AG04450 (cell line): ENCODE measurements at regions of chr4 and their contacts with region 1.

Region 1: DNA sequence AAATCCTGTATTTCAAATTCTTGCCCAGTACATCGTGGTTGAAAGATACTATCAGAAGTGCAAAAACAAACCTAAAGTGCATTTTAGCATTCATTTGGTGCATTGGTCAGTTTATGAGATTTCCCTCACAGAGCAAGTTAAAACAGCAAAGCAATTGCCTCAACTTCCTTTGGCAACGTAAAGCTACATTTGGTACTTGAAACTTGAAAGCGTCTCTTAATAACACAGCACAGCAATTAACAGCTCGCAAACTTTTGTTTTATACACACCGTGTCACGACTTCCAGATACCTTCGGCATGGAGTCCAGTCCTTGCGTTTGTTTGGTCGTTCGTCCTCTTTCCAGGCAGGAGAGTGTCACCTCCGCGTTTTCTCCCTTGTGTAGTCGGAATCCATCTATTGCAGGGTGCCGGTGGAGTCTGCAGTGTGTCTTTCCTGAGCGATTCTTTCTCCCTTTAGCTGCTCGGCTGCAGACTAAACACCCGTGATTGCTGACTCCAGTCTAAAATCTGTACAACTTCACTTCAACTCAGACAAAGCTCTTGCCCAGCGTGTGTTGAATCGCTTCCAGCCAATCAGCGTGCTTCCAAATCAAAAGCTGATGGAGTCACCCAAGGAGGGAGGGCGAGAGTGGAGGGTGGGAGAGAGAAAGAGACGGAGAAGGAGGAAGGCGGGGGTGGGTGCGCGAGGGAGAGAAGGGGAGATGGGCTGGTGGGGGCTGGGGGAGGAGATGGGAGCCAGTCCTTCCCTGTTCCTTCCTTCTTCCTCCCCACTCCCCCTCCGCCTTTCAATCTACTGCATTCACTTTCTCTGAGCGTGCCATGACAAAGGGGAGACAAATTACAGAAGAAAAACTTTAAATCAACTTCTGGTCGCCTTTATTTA is at the start of gene PCDH18:
- DNase-seq: peak; percentile 97
- H3K4me3 ChIP-seq: peak within 1 kb of the TSS; percentile 77
- H3K27ac ChIP-seq: peak within 1 kb of the TSS; percentile 65
- H3K27me3 ChIP-seq: no peaks in the 10 kb centered on the region
- CTCF ChIP-seq: no peak
- polyA plus RNA-seq, gene PCDH18: 204 and 255 TPM in 2 replicates

Region 2: DNA sequence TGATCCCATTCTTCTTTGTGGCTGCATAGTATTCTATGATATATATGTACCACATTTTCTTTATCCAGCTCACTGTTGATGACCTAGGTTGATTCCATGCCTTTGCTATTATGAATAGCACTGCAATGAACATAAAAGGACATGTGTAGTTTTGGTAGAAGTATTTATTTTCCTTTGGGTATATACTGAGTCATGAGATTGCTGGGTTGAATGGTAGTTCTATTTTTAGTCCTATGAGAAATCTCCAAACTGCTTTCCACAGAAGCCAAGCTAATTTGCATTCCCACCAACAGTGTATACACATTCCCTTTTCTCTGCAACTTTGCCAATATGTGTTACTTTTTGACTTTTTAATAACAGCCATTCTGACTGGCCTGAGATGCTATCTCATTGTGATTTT is 278.3 kb before region 1 on chr4:
- CTCF ChIA-PET with region 1: no interaction called
- POLR2A ChIA-PET with region 1: no interaction called
- DNase-seq: peak; percentile 30
- H3K4me3 ChIP-seq: no peak overlapping the region
- H3K27ac ChIP-seq: no peak overlapping the region
- H3K27me3 ChIP-seq: no peaks in the 10 kb centered on the region
- CTCF ChIP-seq: no peak

Region 3: DNA sequence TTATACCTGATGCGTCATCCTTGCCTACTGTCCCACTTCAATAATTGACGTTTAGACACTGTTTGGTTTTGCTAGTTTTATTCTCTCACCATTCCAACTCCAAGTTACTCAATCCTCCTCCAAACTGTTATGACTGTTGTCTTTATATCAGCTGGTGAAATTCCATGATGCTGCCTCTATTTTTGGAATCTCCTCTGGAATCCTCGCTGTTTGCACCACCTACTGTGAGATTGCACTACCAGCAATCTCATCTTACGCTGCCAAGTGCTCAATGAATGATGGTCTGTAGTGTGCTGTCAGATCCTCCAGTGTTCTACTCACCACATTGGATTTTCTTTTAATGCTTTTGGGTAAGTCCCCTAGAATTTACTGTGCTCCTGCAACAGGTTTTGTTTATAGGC is 13.2 kb after region 1 on chr4:
- CTCF ChIA-PET with region 1: interaction called, 5 read pairs
- POLR2A ChIA-PET with region 1: interaction called, 13 read pairs
- DNase-seq: peak; percentile 85
- H3K4me3 ChIP-seq: no peak overlapping the region
- H3K27ac ChIP-seq: peak overlapping the region; percentile 62
- H3K27me3 ChIP-seq: no peaks in the 10 kb centered on the region
- CTCF ChIP-seq: peak; percentile 33; the same call in 1 of the 2 replicates

Region 4: GRCh38 chr4:137614508-137614907 is 82.3 kb after region 1 on chr4:
- CTCF ChIA-PET with region 1: interaction called, 3 read pairs
- POLR2A ChIA-PET with region 1: interaction called, 12 read pairs
- DNase-seq: no peak
- H3K4me3 ChIP-seq: no peak overlapping the region
- H3K27ac ChIP-seq: no peak overlapping the region
- H3K27me3 ChIP-seq: no peaks in the 10 kb centered on the region
- CTCF ChIP-seq: no peak

Region 5: DNA sequence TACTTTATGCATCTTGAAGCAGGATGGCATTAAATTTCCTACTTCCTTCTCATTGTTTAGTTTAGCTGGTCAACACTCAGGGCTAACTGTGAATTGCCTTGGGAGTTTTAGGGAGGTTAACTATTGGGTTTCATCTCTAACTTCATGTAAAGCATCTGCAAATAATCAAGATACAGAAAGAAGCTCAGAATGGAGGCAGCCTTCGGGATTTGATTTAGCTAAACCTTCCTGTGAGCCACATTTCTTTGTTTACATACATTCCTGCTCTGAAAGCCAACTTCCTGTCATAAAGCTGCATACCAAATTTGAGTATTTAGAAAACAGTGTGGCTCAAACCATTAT is 131.8 kb after region 1 on chr4:
- CTCF ChIA-PET with region 1: interaction called, 3 read pairs
- POLR2A ChIA-PET with region 1: interaction called, 21 read pairs
- DNase-seq: peak; percentile 78
- H3K4me3 ChIP-seq: no peak overlapping the region
- H3K27ac ChIP-seq: peak overlapping the region; percentile 32
- H3K27me3 ChIP-seq: no peaks in the 10 kb centered on the region
- CTCF ChIP-seq: no peak

Region 6: DNA sequence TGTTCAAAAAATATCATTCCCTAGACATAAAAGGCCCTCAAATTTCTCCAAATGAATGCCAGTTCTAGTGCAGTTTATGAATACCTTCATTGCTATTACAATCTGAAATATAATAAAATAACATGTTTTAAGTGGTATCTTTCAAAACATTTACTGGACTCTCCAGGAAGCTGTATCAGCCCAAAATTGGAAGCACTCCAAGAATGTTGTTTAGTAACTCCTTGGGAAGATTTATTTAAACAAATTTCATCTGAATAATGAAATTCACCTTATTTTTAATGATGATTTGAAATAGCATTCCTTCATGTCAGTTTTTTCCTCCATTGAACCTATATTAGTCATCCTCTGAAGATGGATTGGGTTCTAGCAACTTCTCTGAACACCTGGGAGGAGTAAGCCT is 217.2 kb after region 1 on chr4:
- CTCF ChIA-PET with region 1: no interaction called
- POLR2A ChIA-PET with region 1: no interaction called
- DNase-seq: peak; percentile 11
- H3K4me3 ChIP-seq: no peak overlapping the region
- H3K27ac ChIP-seq: no peak overlapping the region
- H3K27me3 ChIP-seq: no peaks in the 10 kb centered on the region
- CTCF ChIP-seq: no peak